CD14-positive monocyte (primary cell): ENCODE measurements at regions of chr21 and their contacts with region 1.

Region 1: GRCh38 chr21:33069976-33070811 is at the start of gene OLIG1:
- DNase-seq: peak; percentile 69 to 74 (median 72)
- H3K4me3 ChIP-seq: peak within 1 kb of the TSS; percentile 76 to 89 (median 87)
- H3K4me3 Mint-ChIP-seq: peak within 1 kb of the TSS; percentile 93 to 97
- H3K27ac ChIP-seq: peak within 1 kb of the TSS; percentile 64 to 84
- H3K27ac Mint-ChIP-seq: peak within 1 kb of the TSS; percentile 38 to 95 (median 90)
- H3K4me1 ChIP-seq: peaks cover 51 to 68% of the 10 kb centered on the region in 2 donors
- H3K4me1 Mint-ChIP-seq: peaks cover 63% of the 10 kb centered on the region
- H3K27me3 ChIP-seq: peaks cover 4 to 29% of the 10 kb centered on the region in 2 donors
- H3K27me3 Mint-ChIP-seq: peaks cover 9 to 24% (median 24%) of the 10 kb centered on the region in 3 donors
- CTCF ChIP-seq: no peak
- polyA plus RNA-seq, gene OLIG1: 20.0 to 51.0 (median 40.7) TPM

Region 2: GRCh38 chr21:33025489-33026442 is 44.4 kb before region 1 on chr21 and contains the start of gene OLIG2:
- intact Hi-C with region 1: loop called (anchors 5 kb)
- DNase-seq: peak; percentile 60 to 71 (median 63)
- H3K4me3 ChIP-seq: peak within 1 kb of the TSS in 1 of 3 experiments; percentile 69
- H3K4me3 Mint-ChIP-seq: peak within 1 kb of the TSS; percentile 75 to 87
- H3K27ac ChIP-seq: no peak within 1 kb of the TSS
- H3K27ac Mint-ChIP-seq: peak within 1 kb of the TSS; percentile 18 to 91 (median 53)
- H3K4me1 ChIP-seq: peaks cover 72 to 79% of the 10 kb centered on the region in 2 donors
- H3K4me1 Mint-ChIP-seq: peaks cover 79% of the 10 kb centered on the region
- H3K27me3 ChIP-seq: peaks cover 61 to 96% of the 10 kb centered on the region in 2 donors
- H3K27me3 Mint-ChIP-seq: peaks cover 91 to 99% (median 94%) of the 10 kb centered on the region in 3 donors
- CTCF ChIP-seq: no peak
- polyA plus RNA-seq, gene OLIG2: 0.20 TPM in 1 of 3 donors, not detected in the others

Region 3: DNA sequence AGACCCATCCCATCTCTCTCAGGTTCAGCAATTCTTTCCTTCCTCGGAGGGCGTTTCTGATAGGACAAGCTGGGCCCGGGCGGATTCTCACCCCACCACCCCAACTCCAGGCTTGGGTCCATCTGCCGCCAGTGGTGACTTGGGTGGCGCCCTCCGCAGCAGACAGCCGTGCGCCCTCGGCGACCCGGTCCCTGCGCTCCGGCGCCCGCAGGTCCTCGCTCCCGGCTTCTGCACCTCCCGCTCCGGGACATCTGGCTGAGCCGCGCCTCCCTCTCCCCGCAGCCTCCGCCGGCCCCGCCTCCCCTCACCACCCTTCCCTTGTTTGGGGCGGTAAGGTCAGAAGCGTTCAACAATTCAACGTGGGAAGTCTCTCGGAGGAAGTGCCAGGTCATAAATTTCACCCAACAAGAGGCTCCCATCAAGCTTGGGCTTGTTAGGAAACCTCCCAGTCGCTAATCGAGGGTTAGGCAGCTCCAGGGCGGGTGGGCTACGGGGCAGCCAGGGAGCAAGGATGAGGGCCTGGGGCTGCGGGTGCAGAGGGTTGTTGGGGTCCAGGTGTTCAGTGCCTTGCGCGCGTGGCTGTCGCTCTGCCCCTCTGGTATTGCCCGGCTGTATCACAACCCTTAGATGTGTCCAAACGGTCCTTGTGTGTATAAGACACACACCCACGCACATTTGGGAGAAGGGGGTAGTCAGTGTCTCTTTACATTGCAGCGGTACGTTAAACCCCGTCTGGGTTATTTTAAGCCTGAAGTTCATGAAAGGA is 39.6 kb after region 1 on chr21:
- intact Hi-C with region 1: loop called in 1 of 2 experiments (anchors 5 kb)
- DNase-seq: peak; percentile 50 to 54 (median 54)
- H3K4me3 ChIP-seq: peak overlapping the region in 2 of 3 experiments; percentile 5 to 74
- H3K4me3 Mint-ChIP-seq: peak overlapping the region; percentile 67 to 86
- H3K27ac ChIP-seq: no peak overlapping the region
- H3K27ac Mint-ChIP-seq: peak overlapping the region in 2 of 7 donors; percentile 26 to 42
- H3K4me1 ChIP-seq: peaks cover 12 to 14% of the 10 kb centered on the region in 2 donors
- H3K4me1 Mint-ChIP-seq: peaks cover 14% of the 10 kb centered on the region
- H3K27me3 ChIP-seq: peaks cover 0 to 26% of the 10 kb centered on the region in 2 donors
- H3K27me3 Mint-ChIP-seq: peaks cover 24 to 40% (median 30%) of the 10 kb centered on the region in 3 donors
- CTCF ChIP-seq: no peak